Right ventricle myocardium inferior (tissue), 1 donor: ENCODE measurements at regions of chr2 and their contacts with region 1.

Region 1: DNA sequence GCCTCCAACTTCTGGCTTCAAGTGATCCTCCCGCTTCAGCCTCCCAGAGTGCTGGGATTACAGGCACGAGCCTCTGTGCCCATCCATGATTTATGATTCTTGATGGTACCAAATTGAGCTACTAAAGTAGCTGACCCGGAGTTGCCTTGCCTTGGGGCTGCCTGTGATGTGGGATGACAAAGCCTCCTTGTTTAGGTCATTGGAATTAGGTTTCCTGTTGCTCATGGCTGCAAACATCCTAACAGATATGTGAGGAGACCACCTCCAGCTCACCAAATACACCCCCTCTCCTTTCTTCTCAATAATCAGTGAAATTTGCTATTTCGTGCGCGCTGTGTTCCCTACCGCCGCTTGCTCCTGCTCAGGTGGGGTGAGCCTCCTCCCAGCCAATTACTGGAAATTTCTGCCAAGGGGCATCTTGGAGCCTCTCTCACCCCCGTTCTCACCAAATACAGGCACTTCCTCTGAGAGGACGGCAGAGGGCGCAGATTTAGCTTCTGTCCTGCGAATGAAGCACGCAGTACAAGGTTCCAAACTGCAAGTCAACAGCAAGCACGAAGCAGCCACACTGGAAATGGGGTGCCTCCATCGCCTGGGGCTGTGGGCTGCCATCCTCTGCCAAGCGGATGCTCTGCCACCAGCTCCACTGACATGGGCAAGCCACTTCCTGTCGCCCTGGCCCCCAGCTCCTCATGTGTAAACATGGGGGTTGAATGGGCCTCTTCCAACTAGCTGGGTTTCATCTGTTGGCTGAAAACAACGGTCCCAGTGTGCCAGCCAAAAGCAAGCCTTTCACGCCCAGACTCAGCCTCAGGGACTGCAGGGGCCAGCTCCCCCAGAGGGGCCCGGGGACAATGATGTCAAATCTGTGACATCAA is 71.7 kb downstream of the NCAPH start:
- DNase-seq: peak; percentile 75
- ATAC-seq: peak; percentile 37

Region 2: DNA sequence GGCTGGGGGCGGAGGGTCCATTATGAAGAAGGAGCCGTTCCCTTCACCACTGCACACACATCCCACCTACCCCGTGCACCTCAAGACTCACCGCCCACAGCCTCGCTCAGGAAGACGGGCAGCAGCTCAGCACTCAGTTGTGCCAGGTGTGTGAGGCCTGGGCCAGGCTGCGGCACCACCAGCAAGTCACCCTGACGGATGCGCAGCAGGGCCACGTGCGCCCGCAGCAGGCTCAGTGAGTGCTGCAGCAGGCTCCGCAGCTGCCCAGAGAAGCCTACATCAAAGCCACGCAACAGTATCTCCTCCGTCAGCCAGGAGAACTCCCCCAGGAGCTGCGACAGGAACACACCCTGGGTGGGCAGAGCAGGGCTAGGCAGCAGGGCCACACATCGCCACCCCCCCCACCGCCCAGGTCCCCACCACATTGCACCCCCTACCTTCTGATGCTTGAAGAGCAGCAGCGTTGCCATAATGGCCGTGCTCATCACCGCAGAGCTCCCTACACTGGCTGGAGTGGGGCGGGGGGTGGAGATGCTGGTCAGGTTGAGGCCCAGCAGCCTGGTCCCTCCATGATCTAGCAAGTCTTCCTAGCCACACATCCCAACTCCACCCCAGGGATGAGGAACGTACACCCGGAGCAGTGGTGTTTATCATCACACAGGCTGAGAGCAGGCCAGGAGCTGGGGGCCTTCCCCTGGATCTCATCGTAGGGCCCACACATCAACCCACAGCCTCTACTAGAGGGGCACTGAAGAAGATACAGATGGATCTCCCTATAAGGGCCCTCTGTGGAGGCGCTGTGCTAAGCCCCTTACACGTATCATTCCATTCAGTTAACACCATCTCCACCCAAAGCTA is 382.7 kb before region 1 on chr2:
- intact Hi-C with region 1: loop called (anchors 10 kb)
- DNase-seq: peak; percentile 51
- ATAC-seq: no peak

Region 3: DNA sequence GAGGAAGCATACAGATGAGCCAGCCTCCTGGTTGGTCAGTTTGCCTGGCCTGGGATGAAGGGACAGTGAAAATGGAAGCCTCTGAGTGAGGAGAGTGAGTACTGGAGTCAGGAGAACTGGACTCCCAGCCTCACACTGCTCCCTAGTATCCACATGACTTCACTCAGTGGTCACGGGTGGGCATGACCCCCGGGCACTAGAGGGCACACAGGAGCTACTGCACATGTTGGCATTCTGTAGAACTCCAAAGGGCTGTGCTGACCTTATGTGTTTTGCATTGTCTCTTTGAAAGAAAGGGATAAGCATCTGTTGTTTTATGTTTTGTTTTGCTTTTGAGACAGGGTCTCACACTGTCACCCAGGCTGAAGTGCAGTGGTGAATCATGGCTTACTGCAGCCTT is 48.0 kb before region 1 on chr2:
- intact Hi-C with region 1: loop called (anchors 5 kb)
- DNase-seq: no peak
- ATAC-seq: no peak

Region 4: GRCh38 chr2:96427917-96428316 is 20.6 kb after region 1 on chr2:
- intact Hi-C with region 1: no loop called
- DNase-seq: no peak
- ATAC-seq: no peak